K562 (cell line): ENCODE measurements at regions of chr1 and their contacts with region 1.

Region 1: DNA sequence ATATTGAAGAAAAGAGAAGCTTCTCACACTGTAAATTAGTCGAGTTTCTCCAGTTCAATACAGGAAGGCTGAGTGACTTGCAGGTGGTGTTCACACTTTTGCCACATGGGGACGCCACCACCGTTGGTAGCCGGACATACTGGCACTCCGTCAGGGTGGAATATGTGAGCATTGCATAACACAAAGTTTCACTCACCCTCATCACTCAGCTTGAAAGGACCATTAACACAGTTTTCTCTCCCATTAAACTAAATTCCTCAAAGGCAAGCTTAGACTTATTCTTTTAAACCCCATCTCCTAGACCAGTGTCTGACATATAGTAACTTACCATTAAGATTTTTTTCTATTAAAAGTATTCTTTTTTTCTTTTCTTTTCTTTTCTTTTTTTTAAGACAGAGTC is 105.3 kb upstream of the SERBP1 start:
- DNase-seq: peak; percentile 71 to 87 (median 75)
- ATAC-seq: peak; percentile 83
- H3K4me3 ChIP-seq: no peak overlapping the region
- H3K27ac ChIP-seq: no peak overlapping the region
- H3K4me1 ChIP-seq: peaks cover 14 to 18% of the 10 kb centered on the region in 2 experiments; a peak in 4 of 5 replicates
- H3K27me3 ChIP-seq: no peaks in the 10 kb centered on the region
- CTCF ChIP-seq: peak; percentile 93 to 99 (median 96)
- EP300 ChIP-seq: 0 out of 2 replicates have a peak, but pooled peaks have one; percentile 35
- POLR2A ChIP-seq: no peak
- RAD21 ChIP-seq: peak; percentile 88 to 97

Region 2: GRCh38 chr1:67561704-67562113 is 26.2 kb after region 1 on chr1:
- CTCF ChIA-PET with region 1: interaction called, 4 read pairs
- POLR2A ChIA-PET with region 1: interaction called, 6 read pairs
- in situ Hi-C with region 1: no loop called
- intact Hi-C with region 1: loop called (anchors 2 kb)
- DNase-seq: peak; percentile 78 to 92 (median 80)
- ATAC-seq: peak; percentile 91
- H3K4me3 ChIP-seq: no peak overlapping the region
- H3K27ac ChIP-seq: no peak overlapping the region
- H3K4me1 ChIP-seq: peaks cover 28 to 31% of the 10 kb centered on the region in 2 experiments; a peak in 4 of 5 replicates
- H3K27me3 ChIP-seq: no peaks in the 10 kb centered on the region
- CTCF ChIP-seq: peak; percentile 91 to 93 (median 91)
- EP300 ChIP-seq: no peak
- POLR2A ChIP-seq: no peak
- RAD21 ChIP-seq: peak; percentile 92

Region 3: GRCh38 chr1:67832737-67833601 is 297.5 kb after region 1 on chr1 and contains the start of gene GNG12:
- CTCF ChIA-PET with region 1: no interaction called
- POLR2A ChIA-PET with region 1: no interaction called
- in situ Hi-C with region 1: no loop called
- intact Hi-C with region 1: loop called (anchors 5 kb)
- DNase-seq: peak; percentile 67 to 69 (median 68)
- ATAC-seq: peak; percentile 95
- H3K4me3 ChIP-seq: peak within 1 kb of the TSS; percentile 51
- H3K27ac ChIP-seq: no peak within 1 kb of the TSS
- H3K4me1 ChIP-seq: peaks cover 0 to 18% of the 10 kb centered on the region in 2 experiments; a peak in 3 of 5 replicates
- H3K27me3 ChIP-seq: peaks cover 21 to 29% of the 10 kb centered on the region in 2 experiments
- CTCF ChIP-seq: no peak
- EP300 ChIP-seq: no peak
- POLR2A ChIP-seq: no peak
- RAD21 ChIP-seq: no peak
- polyA plus RNA-seq, gene GNG12: 2.6 to 2.7 TPM

Region 4: DNA sequence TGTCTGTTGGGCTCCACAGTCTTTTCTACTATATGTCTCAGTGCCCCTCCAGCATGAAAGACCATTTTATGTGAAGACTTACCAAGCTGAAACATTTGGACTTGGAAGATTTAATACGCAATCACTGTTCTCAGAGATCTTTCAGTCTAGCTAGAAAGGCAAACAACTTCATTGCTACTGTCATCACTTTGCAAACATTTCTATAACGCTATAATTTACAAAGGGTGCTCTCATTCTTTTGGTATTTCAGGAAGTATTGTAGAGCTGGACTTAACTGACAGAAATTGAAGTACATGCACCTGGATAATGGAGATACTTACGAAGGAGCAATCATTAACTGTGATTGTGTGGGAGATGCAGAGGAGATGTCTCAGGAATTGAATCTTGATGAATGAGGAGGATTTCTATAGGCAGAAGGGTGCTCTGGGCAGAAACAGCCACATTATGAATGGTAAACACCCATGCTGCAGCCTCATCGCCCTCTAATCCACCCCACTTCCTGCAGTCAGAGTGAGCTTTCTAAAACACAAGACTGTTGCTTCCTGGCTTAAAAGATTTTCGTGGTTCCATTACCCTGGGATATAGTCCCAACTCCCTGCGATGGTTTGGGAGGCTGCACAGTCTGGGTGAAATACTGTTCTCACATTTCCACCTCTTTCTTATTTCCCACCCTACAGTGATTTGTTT is 372.9 kb after region 1 on chr1:
- CTCF ChIA-PET with region 1: no interaction called
- POLR2A ChIA-PET with region 1: no interaction called
- in situ Hi-C with region 1: no loop called
- intact Hi-C with region 1: no loop called
- DNase-seq: no peak
- ATAC-seq: no peak
- H3K4me3 ChIP-seq: no peak overlapping the region
- H3K27ac ChIP-seq: no peak overlapping the region
- H3K4me1 ChIP-seq: peaks cover 0 to under 1% of the 10 kb centered on the region in 2 experiments; a peak in 2 of 5 replicates
- H3K27me3 ChIP-seq: no peaks in the 10 kb centered on the region; a peak in 1 of 5 replicates
- CTCF ChIP-seq: no peak
- EP300 ChIP-seq: no peak
- POLR2A ChIP-seq: no peak
- RAD21 ChIP-seq: no peak

Region 5: DNA sequence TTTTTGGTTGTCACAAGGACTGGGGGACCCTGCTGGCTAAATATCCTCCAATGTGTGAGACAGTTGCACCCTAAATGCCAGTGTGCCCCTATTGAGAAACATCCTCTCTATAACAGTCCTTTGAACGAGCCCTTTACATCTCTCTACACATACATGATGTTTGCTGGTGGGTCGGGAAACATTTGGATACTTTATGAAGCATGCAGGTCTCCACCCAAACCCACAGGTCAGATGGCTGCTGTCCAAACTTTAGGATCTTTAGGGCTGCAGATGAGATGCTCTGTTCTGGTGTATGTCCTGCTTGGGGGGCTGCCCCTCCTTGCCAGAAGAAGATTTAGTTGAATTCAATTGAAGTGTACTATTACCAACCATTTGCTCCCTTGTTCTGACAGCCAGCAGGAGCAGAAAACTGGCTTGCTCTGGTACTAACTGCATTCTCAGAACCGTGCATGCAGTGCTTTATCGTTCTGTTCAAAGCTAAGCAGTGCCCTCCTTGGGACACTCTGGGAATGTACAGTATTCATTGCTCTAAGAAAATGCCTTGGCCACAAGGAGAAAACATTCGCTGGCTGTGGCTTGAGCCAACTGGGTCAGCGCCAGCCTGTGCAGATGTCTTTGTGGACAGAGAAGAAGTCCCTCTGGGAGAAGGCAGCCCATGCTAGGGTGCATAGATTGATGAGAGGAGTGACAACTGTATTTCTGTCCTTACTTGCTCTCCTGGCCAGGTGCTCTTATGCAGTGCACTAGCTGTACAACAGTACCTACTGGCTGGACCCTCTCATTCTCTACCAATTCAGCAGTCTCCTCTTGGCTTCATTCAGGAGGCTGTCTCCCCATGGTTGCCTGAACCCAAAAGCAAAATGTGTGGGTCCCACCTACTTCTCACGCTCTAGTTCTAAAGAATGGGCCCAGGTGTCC is 576.3 kb after region 1 on chr1:
- CTCF ChIA-PET with region 1: interaction called, 4 read pairs
- POLR2A ChIA-PET with region 1: no interaction called
- in situ Hi-C with region 1: loop called (anchors 25 kb)
- intact Hi-C with region 1: loop called (anchors 5 kb)
- DNase-seq: peak in 2 of 4 experiments; percentile 42 to 51
- ATAC-seq: peak; percentile 93
- H3K4me3 ChIP-seq: no peak overlapping the region
- H3K27ac ChIP-seq: no peak overlapping the region
- H3K4me1 ChIP-seq: no peaks in the 10 kb centered on the region
- H3K27me3 ChIP-seq: no peaks in the 10 kb centered on the region; a peak in 1 of 5 replicates
- CTCF ChIP-seq: peak; percentile 71 to 84 (median 74)
- EP300 ChIP-seq: no peak
- POLR2A ChIP-seq: no peak
- RAD21 ChIP-seq: peak; percentile 97

Region 6: GRCh38 chr1:68346188-68346808 is 810.8 kb after region 1 on chr1:
- CTCF ChIA-PET with region 1: no interaction called
- POLR2A ChIA-PET with region 1: no interaction called
- in situ Hi-C with region 1: loop called (anchors 25 kb)
- intact Hi-C with region 1: no loop called
- DNase-seq: peak in 2 of 4 experiments; percentile 7 to 19
- ATAC-seq: no peak; the same call in 2 of the 3 replicates
- H3K4me3 ChIP-seq: no peak overlapping the region
- H3K27ac ChIP-seq: no peak overlapping the region
- H3K4me1 ChIP-seq: no peaks in the 10 kb centered on the region
- H3K27me3 ChIP-seq: no peaks in the 10 kb centered on the region
- CTCF ChIP-seq: peak; percentile 26 to 47 (median 38); a peak in 4 of 6 replicates
- EP300 ChIP-seq: no peak
- POLR2A ChIP-seq: no peak
- RAD21 ChIP-seq: peak; percentile 20 to 51; a peak in 3 of 4 replicates